ENCODE measurements at regions of chr3 and their contacts with region 1.

Region 1: GRCh38 chr3:45593708-45594609 is 592 bp upstream of the LIMD1 start:
- DNase-seq: peak; percentile 77
- H3K4me3 ChIP-seq: peak overlapping the region; percentile 61 to 67 (median 64)
- H3K27ac ChIP-seq: peak overlapping the region; percentile 70
- H3K4me1 ChIP-seq: peaks cover 38% of the 10 kb centered on the region
- H3K27me3 ChIP-seq: no peaks in the 10 kb centered on the region
- CTCF ChIP-seq: no peak
- POLR2A ChIP-seq: peak; percentile 59

Region 2: GRCh38 chr3:45224824-45225464 is 369.0 kb before region 1 on chr3:
- CTCF ChIA-PET with region 1: no interaction called
- POLR2A ChIA-PET with region 1: no interaction called
- dilution Hi-C with region 1: no loop called
- intact Hi-C with region 1: loop called (anchors 1 kb)
- DNase-seq: peak; percentile 64
- H3K4me3 ChIP-seq: peak overlapping the region; percentile 12 to 76 (median 45)
- H3K27ac ChIP-seq: no peak overlapping the region
- H3K4me1 ChIP-seq: peaks cover 10% of the 10 kb centered on the region
- H3K27me3 ChIP-seq: peaks cover 20 to 42% of the 10 kb centered on the region in 2 experiments
- CTCF ChIP-seq: peak; percentile 52 to 72
- POLR2A ChIP-seq: no peak

Region 3: DNA sequence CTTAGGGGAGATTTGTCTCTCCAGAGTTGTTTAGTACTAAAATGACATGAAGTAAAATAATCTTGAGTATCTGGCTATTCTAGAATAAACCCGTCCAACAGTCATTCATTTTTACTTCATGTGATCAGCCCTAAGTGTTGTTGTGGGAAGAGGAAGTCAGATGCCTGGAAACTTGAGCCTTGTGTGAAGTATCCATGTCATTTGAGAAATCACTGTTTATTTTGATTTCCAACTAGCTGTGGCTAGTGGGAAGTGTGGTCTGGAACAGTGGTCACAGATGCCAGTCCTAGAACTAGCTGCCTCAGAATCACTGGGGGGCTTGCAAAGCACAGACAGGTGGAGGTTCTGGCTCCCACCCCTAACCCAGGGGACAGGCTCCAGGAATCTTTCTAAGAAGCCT is 77.1 kb before region 1 on chr3:
- CTCF ChIA-PET with region 1: interaction called, 7 read pairs
- POLR2A ChIA-PET with region 1: no interaction called
- dilution Hi-C with region 1: no loop called
- intact Hi-C with region 1: loop called (anchors 1 kb)
- DNase-seq: peak; percentile 33
- H3K4me3 ChIP-seq: no peak overlapping the region
- H3K27ac ChIP-seq: no peak overlapping the region
- H3K4me1 ChIP-seq: peaks cover 15% of the 10 kb centered on the region
- H3K27me3 ChIP-seq: no peaks in the 10 kb centered on the region
- CTCF ChIP-seq: no peak
- POLR2A ChIP-seq: no peak

Region 4: GRCh38 chr3:45607790-45608189 is 13.8 kb after region 1 on chr3:
- CTCF ChIA-PET with region 1: interaction called, 16 read pairs
- POLR2A ChIA-PET with region 1: no interaction called
- dilution Hi-C with region 1: no loop called
- intact Hi-C with region 1: no loop called
- DNase-seq: no peak
- H3K4me3 ChIP-seq: no peak overlapping the region
- H3K27ac ChIP-seq: no peak overlapping the region
- H3K4me1 ChIP-seq: peaks cover 8% of the 10 kb centered on the region
- H3K27me3 ChIP-seq: no peaks in the 10 kb centered on the region
- CTCF ChIP-seq: no peak
- POLR2A ChIP-seq: no peak

Region 5: GRCh38 chr3:45647148-45647619 is 53.2 kb after region 1 on chr3:
- CTCF ChIA-PET with region 1: interaction called, 4 read pairs
- POLR2A ChIA-PET with region 1: no interaction called
- dilution Hi-C with region 1: no loop called
- intact Hi-C with region 1: loop called (anchors 1 kb)
- DNase-seq: peak; percentile 92
- H3K4me3 ChIP-seq: no peak overlapping the region
- H3K27ac ChIP-seq: peak overlapping the region; percentile 89
- H3K4me1 ChIP-seq: peaks cover 57% of the 10 kb centered on the region
- H3K27me3 ChIP-seq: no peaks in the 10 kb centered on the region
- CTCF ChIP-seq: no peak
- POLR2A ChIP-seq: peak; percentile 49

Region 6: GRCh38 chr3:45688882-45689756 is 95.2 kb after region 1 on chr3 and contains the start of gene SACM1L:
- CTCF ChIA-PET with region 1: no interaction called
- POLR2A ChIA-PET with region 1: interaction called, 3 read pairs
- dilution Hi-C with region 1: no loop called
- intact Hi-C with region 1: loop called (anchors 1 kb)
- DNase-seq: peak; percentile 99
- H3K4me3 ChIP-seq: peak within 1 kb of the TSS; percentile 90 to 97 (median 94)
- H3K27ac ChIP-seq: peak within 1 kb of the TSS; percentile 77
- H3K4me1 ChIP-seq: peaks cover 33% of the 10 kb centered on the region
- H3K27me3 ChIP-seq: no peaks in the 10 kb centered on the region
- CTCF ChIP-seq: no peak
- POLR2A ChIP-seq: peak; percentile 79
- total RNA-seq, gene SACM1L: 35.4 and 39.9 TPM in 2 replicates

Measured in endothelial cell of umbilical vein (primary cell).